OCI-LY7 (cell line): ENCODE measurements at regions of chr1 and their contacts with region 1.

Region 1: DNA sequence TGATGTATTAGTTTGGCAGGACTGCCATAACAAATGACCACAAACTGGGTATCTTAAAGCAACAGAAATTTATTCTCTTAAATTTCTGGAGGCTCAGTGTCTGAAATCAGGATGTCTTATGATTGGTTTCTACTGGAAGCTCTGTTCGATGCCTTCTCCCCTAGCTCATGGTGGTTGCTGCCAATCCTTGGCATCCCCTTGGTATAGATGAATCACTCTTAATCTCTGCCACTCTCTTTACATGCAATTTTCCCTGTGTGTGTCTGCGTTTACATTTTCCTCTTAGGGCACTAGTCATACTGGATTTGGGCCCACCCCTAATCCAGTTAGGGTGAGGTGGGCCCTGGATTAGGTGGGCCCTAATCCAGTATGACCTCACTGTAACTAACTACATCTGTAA is 54.7 kb upstream of the MPC2 start:
- DNase-seq: no peak
- H3K4me3 ChIP-seq: no peak overlapping the region
- H3K27ac ChIP-seq: no peak overlapping the region
- H3K4me1 ChIP-seq: no peaks in the 10 kb centered on the region
- CTCF ChIP-seq: no peak

Region 2: GRCh38 chr1:168007691-168008090 is 16.1 kb after region 1 on chr1:
- CTCF ChIA-PET with region 1: no interaction called
- POLR2A ChIA-PET with region 1: interaction called, 5 read pairs
- intact Hi-C with region 1: loop called (anchors 2 kb)
- DNase-seq: no peak
- H3K4me3 ChIP-seq: no peak overlapping the region
- H3K27ac ChIP-seq: no peak overlapping the region
- H3K4me1 ChIP-seq: no peaks in the 10 kb centered on the region
- CTCF ChIP-seq: no peak